ENCODE measurements at regions of chr11 and their contacts with region 1.

Region 1: DNA sequence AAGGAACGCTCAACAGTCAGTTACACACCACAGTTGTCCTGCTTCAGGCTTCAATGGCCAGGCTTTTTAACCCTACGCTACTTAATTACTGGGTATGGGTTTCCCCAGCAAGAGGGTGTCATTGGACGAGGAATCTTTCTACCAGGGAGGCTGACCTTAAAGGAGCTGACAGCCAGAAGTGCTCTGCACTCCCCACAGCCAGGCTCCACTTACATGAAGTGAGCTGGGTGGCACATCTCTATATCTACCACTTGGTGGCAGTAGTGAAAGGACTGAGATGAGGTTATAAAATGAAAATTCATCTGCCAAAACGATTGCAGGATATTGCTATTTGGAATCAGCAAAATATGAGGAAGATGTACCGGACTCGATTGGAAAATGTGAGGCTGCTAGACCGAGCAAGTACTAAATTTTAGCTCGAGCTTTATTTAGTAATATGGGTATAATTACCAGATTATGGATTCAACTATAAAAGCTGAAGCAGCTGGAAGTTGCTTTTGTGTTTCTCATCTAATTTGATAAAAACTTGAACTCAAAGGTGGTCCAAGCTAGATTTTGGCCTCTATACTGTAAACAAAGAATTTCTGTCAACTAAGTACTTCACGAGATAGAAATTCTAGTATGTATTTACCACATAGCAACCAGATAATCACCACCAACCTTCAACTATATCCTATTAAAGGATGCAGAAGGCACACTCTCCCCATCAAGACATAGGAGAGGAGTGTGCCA is 53.9 kb upstream of the CEP126 start:
- DNase-seq: no peak
- H3K4me3 ChIP-seq: no peak overlapping the region
- H3K27ac ChIP-seq: no peak overlapping the region
- H3K27me3 ChIP-seq: no peaks in the 10 kb centered on the region
- CTCF ChIP-seq: peak; percentile 83

Region 2: DNA sequence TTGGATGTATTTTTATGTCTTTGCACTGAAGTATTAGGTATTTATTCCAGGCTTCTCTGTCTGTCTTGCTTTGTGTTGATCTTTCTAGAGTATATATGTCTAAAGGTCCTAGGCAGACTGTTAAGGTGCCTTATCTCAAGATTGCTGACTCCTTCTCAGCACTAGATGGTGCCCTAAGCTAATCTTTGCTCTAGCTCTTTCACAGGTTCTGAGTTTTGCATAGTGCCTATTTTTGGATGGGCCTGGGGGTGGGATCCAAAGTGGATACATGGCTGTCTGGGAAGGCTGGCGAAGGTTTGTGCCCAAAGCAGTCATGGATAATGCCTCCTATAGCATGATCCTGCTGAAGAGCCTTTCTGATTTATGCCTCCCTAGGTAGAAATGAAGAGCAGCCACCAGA is 431.9 kb before region 1 on chr11:
- CTCF ChIA-PET with region 1: interaction called, 18 read pairs
- POLR2A ChIA-PET with region 1: no interaction called
- DNase-seq: no peak
- H3K4me3 ChIP-seq: no peak overlapping the region
- H3K27ac ChIP-seq: no peak overlapping the region
- H3K27me3 ChIP-seq: no peaks in the 10 kb centered on the region
- CTCF ChIP-seq: peak; percentile 67

Region 3: GRCh38 chr11:101446238-101446637 is 414.6 kb before region 1 on chr11:
- CTCF ChIA-PET with region 1: interaction called, 15 read pairs
- POLR2A ChIA-PET with region 1: no interaction called
- DNase-seq: no peak
- H3K4me3 ChIP-seq: no peak overlapping the region
- H3K27ac ChIP-seq: no peak overlapping the region
- H3K27me3 ChIP-seq: no peaks in the 10 kb centered on the region
- CTCF ChIP-seq: no peak

Region 4: GRCh38 chr11:101848262-101848661 is 12.6 kb before region 1 on chr11:
- CTCF ChIA-PET with region 1: interaction called, 32 read pairs
- POLR2A ChIA-PET with region 1: no interaction called
- DNase-seq: no peak
- H3K4me3 ChIP-seq: no peak overlapping the region
- H3K27ac ChIP-seq: no peak overlapping the region
- H3K27me3 ChIP-seq: no peaks in the 10 kb centered on the region
- CTCF ChIP-seq: peak; percentile 32; the same call in 1 of the 2 replicates

Region 5: DNA sequence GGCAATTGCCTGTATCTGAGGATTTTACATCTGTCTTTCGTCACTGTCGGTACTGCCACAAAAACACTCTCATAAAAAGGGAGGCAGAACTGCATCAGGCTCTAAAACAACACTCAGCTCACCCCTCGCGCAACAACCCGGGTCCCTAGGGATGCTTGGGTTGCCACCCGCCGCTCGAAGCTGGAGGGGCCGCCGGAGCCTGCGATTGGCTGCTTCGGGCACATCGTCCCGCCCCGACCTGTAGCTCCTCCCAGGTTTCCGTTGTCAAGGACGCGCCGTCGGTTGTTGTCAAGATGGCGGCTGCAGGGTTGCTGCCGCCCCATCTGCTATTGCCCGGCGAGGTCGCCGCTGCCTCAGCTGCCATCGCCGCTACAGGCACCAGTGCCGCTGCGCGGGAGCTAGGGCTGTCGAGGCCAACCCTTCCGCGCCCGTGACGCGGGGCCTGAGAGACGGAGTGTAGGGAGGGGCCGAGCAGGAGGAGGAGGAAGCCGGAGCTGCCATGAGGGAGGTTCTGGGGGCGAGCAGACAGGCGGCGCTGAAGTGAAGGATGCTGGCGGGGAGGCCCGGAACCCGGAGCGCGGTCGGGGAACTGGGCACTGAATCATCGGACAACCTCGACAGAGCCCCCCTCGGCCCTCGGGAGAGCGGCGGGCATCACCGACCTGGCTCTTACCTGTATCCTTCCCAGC is 54.0 kb after region 1 on chr11 and contains the start of gene CEP126:
- CTCF ChIA-PET with region 1: interaction called, 16 read pairs
- POLR2A ChIA-PET with region 1: no interaction called
- DNase-seq: peak; percentile 81
- H3K4me3 ChIP-seq: peak within 1 kb of the TSS; percentile 91
- H3K27ac ChIP-seq: peak within 1 kb of the TSS; percentile 76
- H3K27me3 ChIP-seq: no peaks in the 10 kb centered on the region
- CTCF ChIP-seq: peak; percentile 63
- polyA plus RNA-seq, gene CEP126: 2.2 and 3.7 TPM in 2 replicates

Region 6: DNA sequence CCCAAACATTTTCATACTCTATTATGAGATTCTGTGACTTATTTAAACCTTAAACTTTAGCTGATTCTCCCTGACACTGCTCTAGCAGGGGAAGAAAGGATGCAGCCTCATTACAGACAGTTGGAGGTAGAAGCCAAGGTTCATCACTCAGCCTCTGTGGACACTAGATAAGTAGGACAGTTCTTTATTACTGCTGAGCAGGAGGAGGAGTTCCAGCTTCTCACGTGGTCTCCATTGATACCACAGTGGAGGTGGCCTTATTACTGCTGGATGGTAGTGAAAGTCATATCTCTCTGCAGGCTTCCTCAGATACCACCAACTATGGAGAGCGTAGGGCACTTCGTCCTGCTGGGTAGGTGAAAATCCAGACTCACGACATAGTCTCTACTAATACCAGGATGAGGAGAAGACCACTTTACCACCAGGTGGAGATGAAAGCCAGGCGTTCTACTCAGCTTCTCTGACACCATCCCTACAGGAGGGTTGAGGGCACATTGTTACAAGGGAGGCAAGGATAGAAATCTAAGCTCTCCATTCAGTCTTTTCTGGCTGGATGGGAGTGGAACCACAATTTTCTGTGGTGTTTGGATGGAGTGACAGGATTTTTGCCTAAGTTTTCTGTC is 68.5 kb after region 1 on chr11:
- CTCF ChIA-PET with region 1: no interaction called
- POLR2A ChIA-PET with region 1: no interaction called
- DNase-seq: no peak
- H3K4me3 ChIP-seq: no peak overlapping the region
- H3K27ac ChIP-seq: no peak overlapping the region
- H3K27me3 ChIP-seq: no peaks in the 10 kb centered on the region
- CTCF ChIP-seq: no peak

Region 7: DNA sequence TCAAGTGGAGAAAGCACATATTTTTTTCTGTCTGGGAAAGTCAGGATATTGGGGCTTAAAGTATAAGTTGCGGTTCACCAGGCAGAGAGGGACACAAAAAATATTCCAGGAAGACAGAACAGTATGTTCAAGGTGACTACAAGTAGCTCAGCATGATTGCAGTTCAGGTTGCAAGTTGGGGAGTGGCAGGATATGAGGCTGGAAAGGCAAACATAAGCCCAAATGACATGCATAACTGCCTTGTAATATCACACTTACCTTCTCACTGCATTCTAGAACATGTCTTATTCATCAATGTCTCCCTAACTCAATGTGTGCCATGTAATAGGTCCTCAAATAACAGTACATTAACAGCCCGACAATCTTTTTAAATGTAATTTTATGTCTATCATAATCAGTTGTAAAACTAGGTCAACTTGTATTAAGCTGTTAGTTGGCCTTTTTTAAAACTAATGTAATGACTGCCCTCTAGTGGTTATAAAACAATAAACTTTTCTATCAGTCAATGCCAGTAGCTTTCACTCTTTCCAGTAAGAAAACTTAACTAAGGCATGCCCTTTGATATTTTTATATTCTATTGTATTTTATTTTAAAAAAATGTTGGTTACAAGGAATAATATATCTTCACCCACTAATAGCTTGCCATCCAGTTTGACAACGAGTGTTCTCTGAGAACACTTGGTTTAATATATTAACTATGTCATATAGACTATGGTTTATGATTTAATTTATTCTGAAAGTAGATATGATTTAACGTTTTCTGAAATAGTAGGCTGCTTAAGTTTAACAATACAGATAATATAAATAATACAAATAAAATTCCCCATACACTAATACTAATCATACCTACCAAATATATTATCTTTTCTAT is 146.9 kb after region 1 on chr11:
- CTCF ChIA-PET with region 1: interaction called, 370 read pairs
- POLR2A ChIA-PET with region 1: interaction called, 4 read pairs
- DNase-seq: peak; percentile 4
- H3K4me3 ChIP-seq: no peak overlapping the region
- H3K27ac ChIP-seq: no peak overlapping the region
- H3K27me3 ChIP-seq: no peaks in the 10 kb centered on the region
- CTCF ChIP-seq: peak; percentile 45